H1 (cell line): ENCODE measurements at regions of chr7 and their contacts with region 1.

Region 1: GRCh38 chr7:18352339-18353255 is 143.0 kb upstream of the HDAC9 start:
- DNase-seq: peak in 1 of 2 experiments; percentile 54
- H3K4me3 ChIP-seq: no peak overlapping the region
- H3K27ac ChIP-seq: no peak overlapping the region
- H3K4me1 ChIP-seq: no peaks in the 10 kb centered on the region; a peak in 1 of 7 replicates
- H3K27me3 ChIP-seq: no peaks in the 10 kb centered on the region
- CTCF ChIP-seq: peak in 2 of 3 experiments; percentile 61 to 72; a peak in 3 of 4 replicates
- EP300 ChIP-seq: no peak
- POLR2A ChIP-seq: no peak
- RAD21 ChIP-seq: peak; percentile 93 to 95

Region 2: DNA sequence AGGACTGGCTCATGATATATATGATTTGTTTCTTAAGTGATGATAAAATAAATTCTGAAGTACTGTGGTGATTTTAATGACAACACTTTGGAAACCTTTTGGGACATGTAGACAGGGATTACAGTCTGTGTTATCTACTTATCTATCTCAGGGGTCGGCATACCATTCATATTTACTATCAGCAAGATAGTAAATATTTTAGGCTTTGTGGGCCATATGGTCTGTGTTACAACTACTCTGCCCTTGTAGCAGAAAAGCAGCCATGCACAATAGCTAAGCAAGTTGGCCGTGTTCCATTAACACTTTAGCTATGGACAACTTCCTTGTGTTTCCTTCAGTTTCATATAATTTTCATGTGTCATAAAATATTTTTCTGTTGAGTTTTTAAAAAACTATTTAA is 227.1 kb before region 1 on chr7:
- CTCF ChIA-PET with region 1: no interaction called
- POLR2A ChIA-PET with region 1: no interaction called
- DNase-seq: no peak
- H3K4me3 ChIP-seq: no peak overlapping the region
- H3K27ac ChIP-seq: no peak overlapping the region
- H3K4me1 ChIP-seq: no peaks in the 10 kb centered on the region
- H3K27me3 ChIP-seq: no peaks in the 10 kb centered on the region
- CTCF ChIP-seq: no peak
- EP300 ChIP-seq: no peak
- POLR2A ChIP-seq: no peak
- RAD21 ChIP-seq: no peak

Region 3: GRCh38 chr7:18315241-18315640 is 37.4 kb before region 1 on chr7:
- CTCF ChIA-PET with region 1: no interaction called
- POLR2A ChIA-PET with region 1: no interaction called
- DNase-seq: no peak
- H3K4me3 ChIP-seq: no peak overlapping the region
- H3K27ac ChIP-seq: no peak overlapping the region
- H3K4me1 ChIP-seq: peaks cover 2 to 8% (median 4%) of the 10 kb centered on the region in 4 experiments; a peak in 4 of 7 replicates
- H3K27me3 ChIP-seq: no peaks in the 10 kb centered on the region
- CTCF ChIP-seq: no peak
- EP300 ChIP-seq: no peak
- POLR2A ChIP-seq: no peak
- RAD21 ChIP-seq: no peak

Region 4: GRCh38 chr7:18363751-18364380 is 11.3 kb after region 1 on chr7:
- CTCF ChIA-PET with region 1: interaction called, 10 read pairs
- POLR2A ChIA-PET with region 1: no interaction called
- DNase-seq: no peak
- H3K4me3 ChIP-seq: no peak overlapping the region
- H3K27ac ChIP-seq: no peak overlapping the region
- H3K4me1 ChIP-seq: peaks cover 0 to 5% (median 3%) of the 10 kb centered on the region in 4 experiments; a peak in 4 of 7 replicates
- H3K27me3 ChIP-seq: no peaks in the 10 kb centered on the region
- CTCF ChIP-seq: no peak
- EP300 ChIP-seq: no peak
- POLR2A ChIP-seq: no peak
- RAD21 ChIP-seq: no peak

Region 5: GRCh38 chr7:18475488-18475887 is 122.9 kb after region 1 on chr7:
- CTCF ChIA-PET with region 1: interaction called, 10 read pairs
- POLR2A ChIA-PET with region 1: no interaction called
- DNase-seq: no peak
- H3K4me3 ChIP-seq: no peak overlapping the region
- H3K27ac ChIP-seq: no peak overlapping the region
- H3K4me1 ChIP-seq: no peaks in the 10 kb centered on the region
- H3K27me3 ChIP-seq: no peaks in the 10 kb centered on the region
- CTCF ChIP-seq: no peak
- EP300 ChIP-seq: no peak
- POLR2A ChIP-seq: no peak
- RAD21 ChIP-seq: no peak

Region 6: GRCh38 chr7:18508443-18509427 is 156.1 kb after region 1 on chr7:
- CTCF ChIA-PET with region 1: interaction called, 58 read pairs
- POLR2A ChIA-PET with region 1: no interaction called
- DNase-seq: no peak
- H3K4me3 ChIP-seq: no peak overlapping the region
- H3K27ac ChIP-seq: no peak overlapping the region
- H3K4me1 ChIP-seq: peaks cover 3 to 9% (median 4%) of the 10 kb centered on the region in 4 experiments; a peak in 4 of 7 replicates
- H3K27me3 ChIP-seq: no peaks in the 10 kb centered on the region
- CTCF ChIP-seq: no peak
- EP300 ChIP-seq: no peak
- POLR2A ChIP-seq: 0 out of 3 replicates have a peak, but pooled peaks of 1 of the 2 experiments have one; percentile 44
- RAD21 ChIP-seq: no peak

Region 7: DNA sequence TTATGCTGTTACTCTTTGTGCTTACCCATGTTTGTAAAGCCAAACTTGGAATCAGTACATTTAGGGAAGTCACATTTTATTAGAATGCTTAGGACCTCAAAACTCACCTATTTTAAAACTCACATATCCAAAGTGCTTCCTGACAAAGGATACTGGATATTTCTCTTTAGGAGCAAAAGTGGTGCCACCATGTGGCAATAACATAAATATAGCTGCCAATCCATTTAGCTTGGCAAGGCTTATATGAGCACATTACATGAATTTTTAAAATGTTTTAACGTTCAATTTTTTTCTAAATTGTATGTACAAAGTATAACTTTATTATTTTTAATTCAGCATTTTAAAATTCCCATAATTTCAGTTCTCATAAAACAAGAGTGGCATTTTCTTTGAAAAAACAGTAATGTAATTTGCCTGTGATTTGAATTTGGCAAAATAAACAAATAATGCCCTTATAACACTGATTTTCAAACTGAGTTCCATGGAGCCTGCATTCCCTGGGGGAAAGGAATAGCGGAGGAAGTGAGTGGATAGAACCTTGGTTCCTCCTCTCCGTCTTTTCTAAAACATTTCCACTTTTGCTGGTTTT is 218.4 kb after region 1 on chr7:
- CTCF ChIA-PET with region 1: interaction called, 131 read pairs
- POLR2A ChIA-PET with region 1: no interaction called
- DNase-seq: no peak
- H3K4me3 ChIP-seq: no peak overlapping the region
- H3K27ac ChIP-seq: no peak overlapping the region
- H3K4me1 ChIP-seq: peaks cover 0 to 9% (median 2%) of the 10 kb centered on the region in 4 experiments; a peak in 4 of 7 replicates
- H3K27me3 ChIP-seq: no peaks in the 10 kb centered on the region
- CTCF ChIP-seq: peak in 2 of 3 experiments; percentile 18 to 31; a peak in 2 of 4 replicates
- EP300 ChIP-seq: no peak
- POLR2A ChIP-seq: no peak
- RAD21 ChIP-seq: peak; percentile 57 to 59

Region 8: DNA sequence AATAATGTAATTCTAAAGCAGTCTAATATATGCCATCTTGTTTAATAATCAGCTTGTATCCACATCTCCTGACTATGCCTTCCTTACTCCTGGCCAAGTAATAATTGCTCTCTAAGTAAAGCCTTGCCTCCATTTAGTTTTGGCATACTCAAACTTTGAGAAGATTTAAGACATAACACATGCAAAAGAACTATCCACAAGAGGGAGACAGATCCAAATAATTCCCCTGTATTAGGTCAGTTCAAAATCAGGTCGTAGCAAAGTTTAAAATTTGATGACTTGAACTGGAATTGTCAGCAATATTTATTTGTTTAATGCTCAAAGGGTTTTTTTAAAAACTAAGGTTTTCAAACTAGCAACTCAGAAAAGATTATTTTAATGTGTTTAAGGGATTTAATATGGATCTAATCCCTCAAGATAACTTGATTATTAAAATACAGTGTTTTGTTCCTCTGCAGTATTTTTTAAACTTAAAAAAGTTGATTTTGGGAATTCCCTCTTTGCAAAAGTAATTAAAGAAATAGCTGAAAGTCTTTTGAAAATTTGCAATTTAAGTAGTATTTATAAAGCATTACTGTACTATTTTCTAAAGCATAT is 238.2 kb after region 1 on chr7:
- CTCF ChIA-PET with region 1: interaction called, 94 read pairs
- POLR2A ChIA-PET with region 1: no interaction called
- DNase-seq: no peak
- H3K4me3 ChIP-seq: no peak overlapping the region
- H3K27ac ChIP-seq: no peak overlapping the region
- H3K4me1 ChIP-seq: no peaks in the 10 kb centered on the region
- H3K27me3 ChIP-seq: no peaks in the 10 kb centered on the region
- CTCF ChIP-seq: peak in 1 of 3 experiments; percentile 62; a peak in 2 of 4 replicates
- EP300 ChIP-seq: no peak
- POLR2A ChIP-seq: no peak
- RAD21 ChIP-seq: peak; percentile 67

Region 9: DNA sequence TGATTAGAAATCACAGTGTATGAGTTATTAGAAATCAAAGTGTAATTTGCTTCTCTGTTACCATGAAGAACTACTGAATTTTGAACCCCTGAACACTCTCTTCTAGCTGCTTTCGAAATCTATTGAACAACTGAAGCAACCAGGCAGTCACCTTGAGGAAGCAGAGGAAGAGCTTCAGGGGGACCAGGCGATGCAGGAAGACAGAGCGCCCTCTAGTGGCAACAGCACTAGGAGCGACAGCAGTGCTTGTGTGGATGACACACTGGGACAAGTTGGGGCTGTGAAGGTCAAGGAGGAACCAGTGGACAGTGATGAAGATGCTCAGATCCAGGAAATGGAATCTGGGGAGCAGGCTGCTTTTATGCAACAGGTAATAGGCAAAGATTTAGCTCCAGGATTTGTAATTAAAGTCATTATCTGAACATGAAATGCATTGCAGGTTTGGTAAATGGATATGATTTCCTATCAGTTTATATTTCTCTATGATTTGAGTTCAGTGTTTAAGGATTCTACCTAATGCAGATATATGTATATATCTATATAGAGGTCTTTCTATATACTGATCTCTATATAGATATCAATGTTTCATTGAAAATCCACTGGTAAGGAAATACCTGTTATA is 313.6 kb after region 1 on chr7:
- CTCF ChIA-PET with region 1: interaction called, 33 read pairs
- POLR2A ChIA-PET with region 1: no interaction called
- DNase-seq: peak; percentile 23 to 88
- H3K4me3 ChIP-seq: no peak overlapping the region
- H3K27ac ChIP-seq: no peak overlapping the region
- H3K4me1 ChIP-seq: no peaks in the 10 kb centered on the region
- H3K27me3 ChIP-seq: no peaks in the 10 kb centered on the region
- CTCF ChIP-seq: peak; percentile 88 to 100 (median 99)
- EP300 ChIP-seq: no peak
- POLR2A ChIP-seq: no peak
- RAD21 ChIP-seq: peak; percentile 84 to 90